ENCODE measurements at regions of chrX and their contacts with region 1.

Region 1: DNA sequence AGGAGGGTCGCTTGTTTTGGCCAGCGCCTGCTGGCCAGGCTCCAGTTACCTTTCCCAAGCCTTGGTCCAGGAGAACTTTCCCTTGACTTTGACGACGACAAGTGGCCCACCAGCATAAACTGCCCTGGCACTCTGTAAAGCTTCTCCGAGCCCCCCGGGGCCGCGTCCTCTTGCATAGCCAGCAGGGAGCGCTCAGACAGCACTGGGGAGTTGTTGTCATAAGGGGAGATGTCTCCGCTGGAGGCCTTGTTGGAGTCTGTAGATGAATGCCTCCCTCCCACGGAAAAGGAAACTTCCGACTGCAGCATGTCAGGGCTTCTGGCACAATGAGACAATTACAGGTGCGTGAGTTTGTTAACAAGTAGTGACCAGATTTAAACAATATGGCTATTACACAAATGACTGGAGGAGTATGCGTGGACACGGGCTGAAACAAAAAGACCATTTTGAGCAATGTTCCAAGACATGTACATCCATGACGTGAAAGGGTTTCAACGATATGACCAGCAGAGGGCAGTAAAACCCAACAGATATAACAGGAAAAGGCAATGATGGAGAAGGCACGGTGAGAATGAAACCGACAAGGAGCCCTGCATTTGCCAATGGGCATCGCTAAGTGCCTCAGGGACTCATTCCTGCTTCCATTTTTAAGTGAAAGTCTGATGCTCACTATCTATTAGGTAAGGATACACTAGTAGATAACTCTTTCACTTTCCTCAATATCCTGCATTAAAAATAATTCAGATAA is 33.0 kb downstream of the HCCS start:
- DNase-seq: no peak
- H3K4me3 ChIP-seq: no peak overlapping the region
- H3K27ac ChIP-seq: no peak overlapping the region
- H3K4me1 ChIP-seq: peaks cover 0 to 9% (median 0%) of the 10 kb centered on the region in 4 donors
- H3K27me3 ChIP-seq: no peaks in the 10 kb centered on the region
- CTCF ChIP-seq: peak; percentile 57 to 65 (median 62)
- EP300 ChIP-seq: no peak
- POLR2A ChIP-seq: no peak

Region 2: DNA sequence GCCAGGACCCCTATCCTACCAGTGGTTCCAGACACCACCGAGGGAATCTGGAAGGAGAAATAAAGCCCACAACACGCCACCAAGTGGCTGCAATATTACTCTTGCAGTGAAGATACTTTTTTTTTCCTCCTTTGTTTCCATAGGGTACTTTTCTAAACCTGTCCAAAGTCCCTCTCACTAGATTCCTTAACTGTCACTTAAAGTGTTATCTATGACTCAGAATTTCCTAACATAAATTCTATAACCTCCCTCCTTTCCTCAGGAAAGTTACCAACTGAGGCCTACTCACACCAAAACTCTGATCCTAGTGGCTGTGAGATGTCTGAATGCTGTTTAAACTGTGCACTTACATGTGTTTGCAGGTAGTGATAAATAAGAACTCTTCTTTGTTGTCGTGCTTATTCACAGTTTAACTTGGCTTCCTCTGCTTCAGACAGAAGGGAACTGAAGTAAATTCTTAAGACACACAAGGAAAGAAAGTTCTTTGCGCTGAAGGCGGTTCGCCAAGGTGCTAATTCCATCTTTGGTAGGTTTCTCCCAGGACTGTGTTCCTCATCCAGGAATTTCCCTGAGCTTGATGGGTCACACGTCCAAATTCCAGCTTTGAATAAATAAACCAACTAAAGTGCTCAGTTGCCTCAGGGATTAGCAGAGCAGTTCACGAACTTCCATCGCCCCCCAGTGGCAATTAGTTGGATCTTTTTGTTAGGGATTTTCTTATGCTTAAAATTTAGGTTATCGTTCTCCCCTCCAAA is 43.6 kb before region 1 on chrX:
- intact Hi-C with region 1: no loop called
- DNase-seq: no peak
- H3K4me3 ChIP-seq: no peak overlapping the region
- H3K27ac ChIP-seq: peak overlapping the region; percentile 69 to 75 (median 72)
- H3K4me1 ChIP-seq: peaks cover 0 to 27% (median 14%) of the 10 kb centered on the region in 4 donors
- H3K27me3 ChIP-seq: no peaks in the 10 kb centered on the region
- CTCF ChIP-seq: peak; percentile 46 to 52 (median 50)
- EP300 ChIP-seq: no peak
- POLR2A ChIP-seq: no peak

Region 3: GRCh38 chrX:11381464-11381863 is 237.4 kb after region 1 on chrX:
- intact Hi-C with region 1: loop called (anchors 10 kb)
- DNase-seq: no peak
- H3K4me3 ChIP-seq: no peak overlapping the region
- H3K27ac ChIP-seq: peak overlapping the region in 3 of 4 donors; percentile 22 to 47 (median 42)
- H3K4me1 ChIP-seq: peaks cover 6 to 30% (median 13%) of the 10 kb centered on the region in 4 donors
- H3K27me3 ChIP-seq: no peaks in the 10 kb centered on the region
- CTCF ChIP-seq: peak; percentile 54 to 63 (median 56)
- EP300 ChIP-seq: no peak
- POLR2A ChIP-seq: no peak

Region 4: DNA sequence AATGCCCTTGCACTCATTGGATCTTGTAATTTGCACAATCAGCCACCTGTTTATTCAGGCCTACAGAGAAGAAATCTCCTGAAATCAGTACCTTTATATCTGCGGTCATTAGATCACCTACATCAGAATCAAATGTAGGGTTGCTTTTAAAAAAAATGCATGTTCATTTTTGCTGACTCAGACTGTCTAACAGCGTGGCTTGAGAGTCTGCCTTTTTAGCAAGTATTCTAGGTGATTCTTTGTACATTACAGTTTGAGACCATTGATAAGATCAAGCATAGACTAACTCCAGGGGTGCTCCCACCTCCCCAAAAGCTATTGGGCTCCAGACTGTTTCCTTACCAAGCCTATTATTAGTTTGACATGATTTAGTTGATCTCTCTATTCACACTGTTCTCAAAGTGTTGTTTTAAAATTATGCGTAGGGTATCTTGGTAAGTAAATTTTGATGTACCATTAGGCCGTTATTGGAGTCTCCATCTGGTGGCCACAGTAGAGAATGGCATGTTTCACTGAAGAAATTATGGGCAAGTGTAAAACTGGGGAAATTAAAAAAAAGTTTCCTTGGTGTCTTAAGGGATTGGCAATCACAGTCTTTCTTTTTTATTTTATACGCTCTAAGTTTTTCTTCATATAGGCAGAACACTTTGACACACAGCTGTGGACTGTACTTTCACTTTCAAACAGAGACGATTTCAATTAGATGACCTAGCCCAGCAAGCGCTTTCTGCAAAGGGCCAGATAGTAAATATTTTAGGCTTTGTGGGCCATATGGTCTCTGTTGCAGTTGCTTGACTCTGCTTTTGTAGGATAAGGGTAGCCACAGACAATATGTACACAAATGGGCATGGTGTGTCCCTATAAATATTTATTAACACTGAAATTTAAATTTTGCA is 580.3 kb after region 1 on chrX:
- intact Hi-C with region 1: loop called (anchors 5 kb)
- DNase-seq: no peak
- H3K4me3 ChIP-seq: no peak overlapping the region
- H3K27ac ChIP-seq: no peak overlapping the region
- H3K4me1 ChIP-seq: peaks cover 0 to 4% (median 0%) of the 10 kb centered on the region in 4 donors
- H3K27me3 ChIP-seq: no peaks in the 10 kb centered on the region
- CTCF ChIP-seq: peak; percentile 65 to 73 (median 70)
- EP300 ChIP-seq: no peak
- POLR2A ChIP-seq: no peak

Region 5: DNA sequence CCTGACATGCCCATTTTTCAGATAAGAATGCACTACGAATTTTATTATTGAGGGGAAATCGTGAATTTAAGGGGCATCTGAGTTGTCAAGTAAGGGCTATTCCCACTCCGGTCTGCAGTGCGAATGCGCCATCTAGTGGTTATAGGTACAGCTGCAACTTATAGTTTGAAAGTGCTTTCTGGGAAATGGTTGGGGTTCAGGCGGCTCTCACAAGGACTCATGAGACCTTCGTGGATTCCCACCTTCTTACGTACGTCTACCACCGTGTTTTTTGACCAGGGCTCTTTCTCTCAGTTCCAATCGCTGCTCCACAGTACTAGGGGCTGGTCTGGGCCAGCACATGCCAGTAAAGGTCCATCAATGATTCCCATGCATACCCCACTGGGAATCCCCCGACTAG is 626.2 kb after region 1 on chrX:
- intact Hi-C with region 1: loop called (anchors 5 kb)
- DNase-seq: no peak
- H3K4me3 ChIP-seq: no peak overlapping the region
- H3K27ac ChIP-seq: no peak overlapping the region
- H3K4me1 ChIP-seq: peaks cover 0 to 4% (median 0%) of the 10 kb centered on the region in 4 donors
- H3K27me3 ChIP-seq: no peaks in the 10 kb centered on the region
- CTCF ChIP-seq: peak; percentile 72 to 83 (median 74)
- EP300 ChIP-seq: no peak
- POLR2A ChIP-seq: no peak